ENCODE measurements at regions of chr5 and their contacts with region 1.

Region 1: DNA sequence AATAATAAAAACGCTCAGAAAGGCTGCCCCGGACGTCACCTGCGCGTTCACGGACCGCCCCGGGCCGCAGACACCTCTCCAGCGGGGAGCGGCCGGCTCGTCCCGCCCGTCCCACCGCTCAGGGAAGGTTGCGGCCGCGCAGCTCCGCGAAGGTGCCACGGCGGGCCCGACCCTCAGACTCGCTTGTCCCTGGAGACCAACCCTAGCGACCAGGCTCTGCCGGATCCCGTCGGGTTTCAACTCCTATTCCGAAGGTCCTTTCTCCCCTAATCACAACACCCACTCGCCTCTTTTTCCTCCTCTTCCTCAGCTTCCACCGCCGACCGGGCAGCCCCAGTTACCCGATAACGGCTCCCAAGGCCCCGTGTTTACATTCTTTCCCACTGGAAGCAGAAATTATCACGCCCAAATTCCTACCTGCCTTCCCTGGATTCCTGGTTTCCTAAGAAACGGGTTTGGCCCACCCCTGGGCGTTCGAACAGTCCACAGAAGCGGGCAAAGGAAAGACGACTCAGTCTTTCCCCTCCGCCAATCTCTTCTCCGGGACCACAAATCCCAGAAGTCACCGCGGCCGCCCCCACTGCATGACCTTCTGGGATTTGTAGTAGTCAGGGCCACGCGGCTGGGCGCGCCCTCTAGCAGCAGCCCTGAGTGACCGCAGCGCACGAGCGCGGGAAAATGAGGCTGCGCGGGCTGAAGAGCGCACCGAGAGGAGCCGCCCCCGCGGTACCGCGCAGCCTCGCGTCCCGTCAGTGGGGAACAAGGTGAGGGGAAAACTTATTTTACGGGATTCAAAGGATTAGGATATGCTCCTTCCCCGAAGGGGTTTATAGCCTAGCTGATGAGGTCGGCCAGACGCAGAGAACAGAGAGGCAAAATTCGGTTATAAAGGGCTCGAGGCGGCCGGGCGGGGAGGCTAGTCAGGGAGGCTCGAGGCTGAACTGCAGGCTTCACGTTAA is at the start of gene TTC33:
- DNase-seq: peak; percentile 96 to 98 (median 97)
- ATAC-seq: peak; percentile 98
- H3K4me3 ChIP-seq: peak within 1 kb of the TSS; percentile 80
- H3K4me1 ChIP-seq: no peaks in the 10 kb centered on the region
- CTCF ChIP-seq: peak; percentile 78
- total RNA-seq, gene TTC33: 15.1 to 22.6 (median 17.2) TPM

Region 2: DNA sequence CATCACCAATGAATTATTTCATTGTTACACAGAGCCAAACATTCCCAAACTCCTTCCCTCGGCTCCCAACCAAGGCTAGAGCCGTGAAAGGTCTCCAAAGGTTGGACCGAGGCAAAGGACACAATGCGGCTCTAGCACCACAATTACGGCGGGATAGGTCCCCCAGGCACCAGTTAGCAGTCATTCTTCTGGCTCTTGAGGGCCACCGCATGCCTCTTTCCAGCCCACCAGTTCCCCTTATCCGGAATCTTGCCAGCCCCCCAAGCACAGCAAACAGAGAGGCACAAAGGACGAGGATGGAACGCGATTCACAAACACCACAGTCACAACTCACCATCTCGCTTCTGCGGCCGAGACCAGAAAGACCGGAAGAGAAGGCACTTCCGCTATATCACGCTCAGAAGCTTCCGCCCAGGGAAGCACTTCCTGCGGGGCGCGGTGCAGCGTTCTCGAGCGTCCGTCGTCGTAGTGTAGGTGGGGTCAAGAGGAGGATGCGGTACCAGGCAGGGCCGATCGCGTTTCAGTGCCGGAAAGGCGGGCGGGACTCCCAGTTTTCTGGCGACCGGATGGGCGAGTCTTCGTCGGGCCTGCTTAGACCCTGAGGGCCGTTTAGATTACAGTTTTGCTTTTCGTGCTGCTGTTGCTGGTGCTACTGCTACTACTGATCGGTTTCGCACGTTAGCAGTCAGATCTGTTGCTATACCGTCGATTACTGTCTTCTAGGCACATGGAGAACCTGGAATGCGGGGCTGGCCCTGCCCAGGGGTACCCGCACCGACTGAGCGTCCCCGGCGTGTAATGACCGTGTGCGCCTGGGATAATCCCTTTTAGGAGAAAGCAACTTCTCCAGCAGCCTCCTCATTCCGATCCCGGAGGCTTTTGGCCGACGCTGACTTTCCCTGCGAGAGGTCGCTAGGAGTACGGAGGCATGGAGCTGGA is 79.4 kb after region 1 on chr5 and contains the start of gene RPL37:
- intact Hi-C with region 1: loop called in 1 of 2 experiments (anchors 5 kb)
- DNase-seq: peak; percentile 95 to 97 (median 96)
- ATAC-seq: peak; percentile 99
- H3K4me3 ChIP-seq: peak within 1 kb of the TSS; percentile 52
- H3K4me1 ChIP-seq: peaks cover 9% of the 10 kb centered on the region
- CTCF ChIP-seq: no peak
- total RNA-seq, gene RPL37: 785 to 853 (median 837) TPM

Region 3: DNA sequence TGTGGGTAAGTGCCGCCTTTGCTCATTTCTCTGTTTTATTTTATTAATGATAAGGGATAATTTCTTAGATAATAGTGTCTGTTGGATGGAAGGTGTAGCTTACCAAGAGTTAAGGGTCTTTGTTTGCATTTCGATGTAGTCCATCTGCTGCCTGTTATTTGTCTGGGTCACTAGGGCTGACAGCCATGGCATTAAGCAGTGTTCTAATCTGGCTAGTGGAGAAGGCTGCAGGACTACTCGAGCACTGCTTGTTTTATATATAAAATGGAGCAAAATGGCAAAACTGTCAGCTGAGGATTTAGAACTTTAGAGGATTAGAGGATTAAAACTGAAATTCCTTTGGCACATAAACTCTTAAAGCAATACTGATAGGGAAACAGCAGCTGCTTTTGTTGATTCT is 221.2 kb after region 1 on chr5:
- intact Hi-C with region 1: no loop called
- DNase-seq: no peak
- ATAC-seq: no peak
- H3K4me3 ChIP-seq: no peak overlapping the region
- H3K4me1 ChIP-seq: no peaks in the 10 kb centered on the region
- CTCF ChIP-seq: no peak

Region 4: GRCh38 chr5:40995801-40996586 is 240.3 kb after region 1 on chr5:
- intact Hi-C with region 1: no loop called
- DNase-seq: no peak
- ATAC-seq: no peak
- H3K4me3 ChIP-seq: no peak overlapping the region
- H3K4me1 ChIP-seq: no peaks in the 10 kb centered on the region
- CTCF ChIP-seq: no peak

Region 5: GRCh38 chr5:41196197-41196596 is 440.5 kb after region 1 on chr5:
- intact Hi-C with region 1: no loop called
- DNase-seq: no peak
- ATAC-seq: no peak
- H3K4me3 ChIP-seq: no peak overlapping the region
- H3K4me1 ChIP-seq: peaks cover 14% of the 10 kb centered on the region
- CTCF ChIP-seq: no peak